Activated B cell treated with CpG ODN at 0.5 μM for 24 hours (primary cell): ENCODE measurements at regions of chr5 and their contacts with region 1.

Region 1: GRCh38 chr5:141747152-141748141 is 65.4 kb upstream of the ARAP3 start:
- DNase-seq: peak; percentile 33
- ATAC-seq: peak; percentile 87
- H3K4me3 Mint-ChIP-seq: peak overlapping the region; percentile 33
- H3K27ac Mint-ChIP-seq: peak overlapping the region; percentile 70
- H3K4me1 Mint-ChIP-seq: peaks cover 23% of the 10 kb centered on the region
- H3K27me3 Mint-ChIP-seq: peaks cover 30% of the 10 kb centered on the region
- CTCF ChIP-seq: no peak

Region 2: DNA sequence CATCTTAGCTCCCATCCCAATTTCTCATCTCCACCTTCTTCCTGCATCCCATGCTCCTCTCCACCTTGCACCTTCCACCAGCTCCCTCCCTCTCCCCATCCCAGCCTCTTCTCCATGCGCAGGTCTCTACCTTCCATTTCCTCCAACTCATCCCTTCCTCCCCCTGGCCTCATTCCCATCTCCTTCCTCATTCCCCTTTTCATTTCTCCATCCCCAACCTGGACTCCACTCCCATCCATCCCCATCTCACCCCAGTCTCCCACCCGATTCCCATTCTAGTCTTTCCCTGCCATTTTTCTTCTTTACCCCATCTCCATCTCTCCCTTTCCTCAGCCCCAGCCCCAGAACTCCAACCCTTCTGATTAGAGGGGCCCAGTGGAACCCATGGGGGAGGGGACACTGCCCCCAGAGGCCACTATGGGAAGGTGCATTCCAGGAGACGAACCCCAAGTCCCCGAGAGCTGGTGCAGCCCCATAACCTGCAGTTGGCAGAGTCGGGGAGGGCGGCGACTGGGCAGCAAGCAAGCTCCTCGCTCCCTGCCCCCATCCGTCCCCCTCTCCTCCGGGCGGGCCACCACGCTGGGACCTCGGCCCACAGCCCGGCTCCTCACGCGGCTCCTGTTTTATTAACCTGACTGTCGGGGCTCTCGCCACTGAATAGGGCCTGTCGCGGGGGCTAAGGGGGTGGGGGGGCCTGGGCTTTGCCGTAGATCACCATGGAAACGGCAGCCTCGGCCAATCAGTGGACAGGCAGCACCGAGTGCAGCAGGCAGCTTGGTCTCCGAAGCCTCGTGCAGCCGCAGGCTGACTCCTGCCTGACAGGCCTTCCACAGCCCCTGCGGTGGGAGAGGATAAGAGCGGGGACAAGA is 64.1 kb after region 1 on chr5:
- CTCF ChIA-PET with region 1: no interaction called
- POLR2A ChIA-PET with region 1: no interaction called
- intact Hi-C with region 1: loop called (anchors 5 kb)
- DNase-seq: no peak
- ATAC-seq: peak; percentile 45
- H3K4me3 Mint-ChIP-seq: no peak overlapping the region
- H3K27ac Mint-ChIP-seq: no peak overlapping the region
- H3K4me1 Mint-ChIP-seq: no peaks in the 10 kb centered on the region
- H3K27me3 Mint-ChIP-seq: peaks cover 57% of the 10 kb centered on the region
- CTCF ChIP-seq: no peak

Region 3: DNA sequence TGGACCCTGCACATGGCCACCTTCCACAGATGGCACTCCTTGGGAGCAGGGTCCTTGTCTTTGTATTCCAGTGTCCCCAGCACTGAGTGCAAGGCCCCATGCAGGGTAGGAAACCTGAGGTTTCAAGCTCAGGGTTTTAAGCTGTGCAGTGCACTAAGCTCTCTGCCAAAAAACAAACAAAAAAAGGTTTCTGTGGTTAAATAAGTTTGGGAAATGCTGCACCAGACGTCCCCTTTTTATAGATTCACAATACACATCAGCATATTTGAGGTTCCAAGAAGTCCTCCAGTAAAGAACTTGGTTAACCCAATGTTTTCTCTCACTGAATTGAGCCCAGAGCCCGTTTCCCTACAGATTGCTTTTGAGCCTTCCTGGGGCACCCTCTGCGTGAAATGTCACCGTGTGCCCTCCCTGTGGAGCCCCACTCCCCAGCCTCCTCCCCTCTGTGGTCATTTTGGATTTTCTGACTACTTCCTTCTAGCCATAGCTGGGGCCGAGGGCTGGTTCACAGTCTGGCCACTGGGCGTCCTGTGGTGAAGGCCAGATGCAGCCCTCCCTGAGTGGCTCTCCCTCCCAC is 193.3 kb after region 1 on chr5:
- CTCF ChIA-PET with region 1: no interaction called
- POLR2A ChIA-PET with region 1: interaction called, 12 read pairs
- intact Hi-C with region 1: no loop called
- DNase-seq: no peak
- ATAC-seq: no peak
- H3K4me3 Mint-ChIP-seq: no peak overlapping the region
- H3K27ac Mint-ChIP-seq: peak overlapping the region; percentile 27
- H3K4me1 Mint-ChIP-seq: no peaks in the 10 kb centered on the region
- H3K27me3 Mint-ChIP-seq: no peaks in the 10 kb centered on the region
- CTCF ChIP-seq: no peak